Mammary epithelial cell (primary cell): ENCODE measurements at regions of chr9 and their contacts with region 1.

Region 1: DNA sequence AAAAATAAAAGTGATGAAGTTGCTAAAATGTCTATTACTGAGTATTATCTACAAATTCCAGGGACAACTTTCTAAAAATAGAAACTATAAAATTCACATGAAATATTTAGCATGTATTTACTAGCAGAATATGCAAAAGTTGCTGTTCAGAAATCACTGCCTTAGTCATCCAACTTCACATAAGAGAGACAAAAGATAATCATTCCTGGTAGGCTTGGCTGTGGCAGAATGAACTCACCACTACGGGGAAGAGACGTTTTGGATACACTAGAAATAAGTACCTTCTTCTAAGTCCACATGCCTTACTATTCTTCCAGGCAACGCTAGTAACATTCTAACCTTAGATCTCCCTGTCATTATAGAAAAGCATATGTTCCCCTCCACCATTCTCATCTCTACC is 272.2 kb downstream of the BNC2 start:
- DNase-seq: no peak
- H3K4me3 ChIP-seq: no peak overlapping the region
- H3K27ac ChIP-seq: no peak overlapping the region
- H3K4me1 ChIP-seq: no peaks in the 10 kb centered on the region
- H3K27me3 ChIP-seq: no peaks in the 10 kb centered on the region
- CTCF ChIP-seq: no peak

Region 2: DNA sequence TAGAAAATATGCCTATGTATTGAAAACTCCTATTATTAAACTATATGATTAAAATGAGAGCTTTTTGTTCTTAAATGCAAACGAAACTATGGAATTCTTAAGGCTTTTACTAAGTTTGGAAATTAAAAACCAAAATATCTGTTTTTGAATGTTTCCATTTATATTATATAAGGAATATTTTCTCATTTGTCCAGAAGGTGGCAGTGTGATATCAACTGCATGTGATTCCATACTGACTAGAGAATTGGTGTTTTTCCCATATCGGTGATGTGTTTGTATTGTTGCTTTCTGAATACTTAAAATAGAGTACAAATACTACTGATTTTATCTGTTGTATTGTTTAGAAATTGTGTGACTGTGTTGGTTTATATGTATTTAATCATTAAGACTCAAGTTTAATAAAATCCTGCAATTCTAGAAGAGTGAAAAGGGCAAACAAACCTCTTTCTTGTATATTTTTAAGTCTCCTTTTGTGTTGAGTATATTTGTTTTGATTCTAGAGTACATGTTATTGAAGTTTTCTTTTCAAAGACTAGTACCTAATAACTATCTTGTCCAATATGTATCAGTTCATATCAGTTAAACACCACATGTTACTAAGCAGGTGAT is 724.6 kb before region 1 on chr9:
- CTCF ChIA-PET with region 1: no interaction called
- dilution Hi-C with region 1: no loop called
- in situ Hi-C with region 1: no loop called
- intact Hi-C with region 1: loop called (anchors 2 kb)
- DNase-seq: peak; percentile 30
- H3K4me3 ChIP-seq: no peak overlapping the region
- H3K27ac ChIP-seq: peak overlapping the region; percentile 5
- H3K4me1 ChIP-seq: no peaks in the 10 kb centered on the region
- H3K27me3 ChIP-seq: no peaks in the 10 kb centered on the region
- CTCF ChIP-seq: peak; percentile 53 to 68